Common myeloid progenitor, CD34-positive (primary cell): ENCODE measurements at regions of chr6 and their contacts with region 1.

Region 1: DNA sequence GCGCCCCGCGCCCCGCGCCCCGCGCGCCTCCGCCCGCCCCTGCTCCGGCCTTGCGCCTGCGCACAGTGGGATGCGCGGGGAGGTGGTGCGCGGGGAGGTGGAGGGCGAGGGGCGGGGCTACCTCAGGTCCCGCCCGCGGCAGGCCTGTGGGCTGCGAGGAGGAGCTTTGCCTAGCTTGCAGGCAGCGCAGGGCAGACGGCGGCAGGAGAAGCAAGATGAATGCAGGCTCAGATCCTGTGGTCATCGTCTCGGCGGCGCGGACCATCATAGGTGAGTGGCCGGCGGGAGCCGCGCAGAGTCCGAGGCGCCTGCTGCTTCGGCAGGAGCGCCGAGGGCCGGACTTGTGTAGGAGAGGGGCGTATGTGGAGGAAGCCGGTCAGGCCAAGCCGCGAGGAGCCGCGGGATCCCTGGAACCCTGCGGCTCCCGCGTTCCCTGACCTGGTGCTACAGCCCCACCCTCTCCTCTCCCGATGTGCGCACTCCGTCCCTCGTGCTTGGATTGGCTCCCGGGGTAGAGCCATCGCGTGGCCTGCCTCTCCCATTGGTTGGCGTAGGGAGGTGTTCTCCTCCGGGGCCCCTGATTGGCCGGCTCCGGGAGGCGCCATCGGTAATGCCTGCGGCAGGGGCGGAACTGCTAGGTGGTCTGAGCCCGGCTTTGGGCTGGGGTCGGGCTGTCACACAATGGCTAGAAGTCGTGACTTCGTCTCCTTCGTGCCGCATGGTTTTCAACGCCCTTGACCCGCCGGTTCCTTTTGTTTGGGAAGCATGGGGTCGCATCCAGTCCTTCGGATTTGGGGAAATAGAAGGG is at the start of gene ACAT2:
- DNase-seq: peak; percentile 93 to 95 (median 95)
- H3K4me3 ChIP-seq: peak within 1 kb of the TSS; percentile 83 to 92 (median 89)
- H3K27ac ChIP-seq: peak within 1 kb of the TSS; percentile 84 to 97
- H3K4me1 ChIP-seq: peaks cover 11 to 34% (median 23%) of the 10 kb centered on the region in 4 experiments
- H3K27me3 ChIP-seq: no peaks in the 10 kb centered on the region

Region 2: DNA sequence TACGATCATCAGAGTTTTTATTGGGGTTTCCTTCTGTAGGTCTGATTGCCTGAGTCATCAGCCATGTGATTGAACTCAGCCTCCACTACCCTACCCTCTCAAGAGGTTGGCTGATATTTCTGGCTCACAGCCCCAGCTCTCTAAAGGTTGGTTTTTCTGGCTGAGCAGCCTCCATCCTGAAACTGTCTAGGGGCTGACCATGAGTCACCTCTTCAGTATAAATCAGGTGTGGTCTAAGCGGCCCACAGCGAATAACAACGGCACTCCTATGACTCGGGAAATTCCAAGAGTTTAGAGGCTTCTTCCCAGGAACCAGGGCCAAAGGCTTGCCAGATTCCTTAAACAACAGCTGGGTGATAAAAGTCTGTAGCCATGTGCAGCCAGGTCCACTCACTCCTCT is 184.5 kb before region 1 on chr6:
- CTCF ChIA-PET with region 1: no interaction called
- POLR2A ChIA-PET with region 1: no interaction called
- DNase-seq: no peak
- H3K4me3 ChIP-seq: no peak overlapping the region
- H3K27ac ChIP-seq: no peak overlapping the region
- H3K4me1 ChIP-seq: no peaks in the 10 kb centered on the region
- H3K27me3 ChIP-seq: peaks cover 0 to 3% (median 0%) of the 10 kb centered on the region in 5 experiments

Region 3: DNA sequence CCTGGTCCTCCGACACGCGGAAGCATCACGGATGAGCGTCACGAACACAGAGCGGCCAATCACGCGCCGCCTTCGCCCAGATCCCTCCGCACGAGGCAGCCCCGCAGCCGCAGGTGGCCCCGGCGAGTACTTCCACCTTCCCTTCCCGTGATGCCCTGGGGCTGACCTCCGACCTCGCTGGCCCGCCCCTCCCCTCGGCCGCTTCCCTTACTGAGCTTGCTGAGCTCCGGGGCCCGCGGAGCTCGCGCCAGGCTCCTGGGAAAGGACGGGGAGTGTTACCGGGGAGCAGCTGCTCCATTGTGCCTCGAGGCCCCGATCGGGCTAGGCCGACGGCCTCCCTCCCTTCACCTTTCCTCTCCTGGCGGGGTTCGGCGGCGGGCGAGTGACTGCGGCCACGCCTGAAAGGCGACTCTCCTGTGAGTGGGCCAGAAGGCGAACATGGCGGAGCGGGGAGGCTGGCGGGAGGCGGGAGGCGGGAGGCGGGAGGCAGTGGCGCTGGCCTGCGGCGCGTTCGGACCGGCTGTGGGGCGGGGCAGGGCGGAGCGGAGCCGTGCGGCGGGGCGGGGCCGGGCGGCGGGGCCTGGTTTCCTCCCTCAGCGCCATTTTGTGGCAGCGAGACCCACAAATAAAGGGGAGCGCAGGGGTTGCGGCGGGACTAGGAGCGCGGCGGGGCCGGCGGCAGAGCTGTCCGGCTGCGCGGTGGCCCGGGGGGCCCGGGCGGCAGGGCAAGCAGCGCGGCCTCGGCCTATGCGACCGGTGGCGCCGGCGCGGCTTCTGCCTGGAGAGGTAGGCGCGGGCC is 35.0 kb before region 1 on chr6 and contains the start of gene WTAP:
- CTCF ChIA-PET with region 1: interaction called, 10 read pairs
- POLR2A ChIA-PET with region 1: interaction called, 6 read pairs
- DNase-seq: peak; percentile 97 to 98 (median 98)
- H3K4me3 ChIP-seq: peak within 1 kb of the TSS; percentile 83 to 99 (median 91)
- H3K27ac ChIP-seq: peak within 1 kb of the TSS; percentile 95 to 96
- H3K4me1 ChIP-seq: peaks cover 20 to 41% (median 27%) of the 10 kb centered on the region in 4 experiments
- H3K27me3 ChIP-seq: no peaks in the 10 kb centered on the region